OCI-LY7 (cell line): ENCODE measurements at regions of chr22 and their contacts with region 1.

Region 1: GRCh38 chr22:19447388-19448075 is at the start of gene C22orf39:
- DNase-seq: peak; percentile 95
- H3K4me3 ChIP-seq: peak within 1 kb of the TSS; percentile 91
- H3K27ac ChIP-seq: peak within 1 kb of the TSS; percentile 71
- H3K4me1 ChIP-seq: peaks cover 27% of the 10 kb centered on the region
- CTCF ChIP-seq: no peak
- total RNA-seq, gene C22orf39: 64.8 and 70.4 TPM in 2 replicates

Region 2: DNA sequence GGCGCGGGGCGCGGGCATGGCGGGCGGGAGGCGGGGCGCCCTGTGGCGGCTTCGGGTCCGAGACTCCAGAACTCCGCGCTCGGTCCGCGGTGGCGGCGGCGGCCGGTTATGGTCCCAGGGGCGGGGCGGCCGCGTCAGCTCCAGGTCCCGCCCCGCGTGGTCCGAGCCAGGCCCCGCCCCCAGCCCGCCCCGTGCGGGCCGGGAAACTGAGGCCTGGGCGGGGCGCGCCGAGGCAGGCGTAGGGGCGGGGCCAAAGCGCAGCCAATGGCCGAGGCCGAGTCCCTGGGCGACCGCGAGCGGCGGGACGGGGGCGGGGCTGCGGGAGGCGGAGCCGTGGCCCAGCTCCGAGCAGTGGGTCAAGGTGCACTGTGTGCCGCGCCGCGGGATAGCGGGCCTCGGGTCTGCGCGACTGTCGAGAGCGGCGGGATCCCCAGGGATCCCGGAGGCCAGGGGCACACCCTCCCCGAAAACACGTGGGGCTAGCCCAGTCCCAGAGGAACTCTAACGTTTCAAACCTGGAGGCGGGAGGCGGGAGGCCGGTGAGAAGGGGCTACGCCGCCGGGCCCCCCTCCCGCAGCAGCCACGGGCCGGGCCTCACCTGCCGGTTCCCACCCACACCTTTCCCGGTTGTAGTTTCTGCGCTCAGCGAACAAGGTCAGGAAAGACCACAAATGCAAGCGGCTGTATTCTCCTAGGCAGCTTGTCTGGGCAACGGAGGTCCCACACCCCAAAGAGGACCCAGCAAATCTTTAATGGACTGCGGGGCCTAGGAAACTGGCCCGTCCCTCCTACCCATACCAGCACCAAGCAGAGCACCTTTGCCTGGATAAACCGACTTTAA is 268.7 kb before region 1 on chr22 and contains the start of gene SLC25A1:
- CTCF ChIA-PET with region 1: no interaction called
- POLR2A ChIA-PET with region 1: no interaction called
- intact Hi-C with region 1: loop called (anchors 5 kb)
- DNase-seq: peak; percentile 93
- H3K4me3 ChIP-seq: peak within 1 kb of the TSS; percentile 88
- H3K27ac ChIP-seq: peak within 1 kb of the TSS; percentile 63
- H3K4me1 ChIP-seq: peaks cover 70% of the 10 kb centered on the region
- CTCF ChIP-seq: no peak
- total RNA-seq, gene SLC25A1: 52.4 and 59.5 TPM in 2 replicates

Region 3: GRCh38 chr22:19361501-19362103 is 85.9 kb before region 1 on chr22:
- CTCF ChIA-PET with region 1: no interaction called
- POLR2A ChIA-PET with region 1: no interaction called
- intact Hi-C with region 1: loop called (anchors 5 kb)
- DNase-seq: peak; percentile 83
- H3K4me3 ChIP-seq: no peak overlapping the region
- H3K27ac ChIP-seq: peak overlapping the region; percentile 42
- H3K4me1 ChIP-seq: peaks cover 18% of the 10 kb centered on the region
- CTCF ChIP-seq: no peak

Region 4: GRCh38 chr22:19469421-19469820 is 21.9 kb after region 1 on chr22:
- CTCF ChIA-PET with region 1: no interaction called
- POLR2A ChIA-PET with region 1: no interaction called
- intact Hi-C with region 1: loop called (anchors 2 kb)
- DNase-seq: no peak
- H3K4me3 ChIP-seq: no peak overlapping the region
- H3K27ac ChIP-seq: no peak overlapping the region
- H3K4me1 ChIP-seq: no peaks in the 10 kb centered on the region
- CTCF ChIP-seq: no peak

Region 5: GRCh38 chr22:19479357-19480172 is 32.0 kb after region 1 on chr22 and contains the start of gene CDC45:
- CTCF ChIA-PET with region 1: no interaction called
- POLR2A ChIA-PET with region 1: no interaction called
- intact Hi-C with region 1: loop called (anchors 5 kb)
- DNase-seq: peak; percentile 98
- H3K4me3 ChIP-seq: peak within 1 kb of the TSS; percentile 94
- H3K27ac ChIP-seq: peak within 1 kb of the TSS; percentile 75
- H3K4me1 ChIP-seq: peaks cover 14% of the 10 kb centered on the region
- CTCF ChIP-seq: no peak
- total RNA-seq, gene CDC45: 80.2 and 90.9 TPM in 2 replicates

Region 6: DNA sequence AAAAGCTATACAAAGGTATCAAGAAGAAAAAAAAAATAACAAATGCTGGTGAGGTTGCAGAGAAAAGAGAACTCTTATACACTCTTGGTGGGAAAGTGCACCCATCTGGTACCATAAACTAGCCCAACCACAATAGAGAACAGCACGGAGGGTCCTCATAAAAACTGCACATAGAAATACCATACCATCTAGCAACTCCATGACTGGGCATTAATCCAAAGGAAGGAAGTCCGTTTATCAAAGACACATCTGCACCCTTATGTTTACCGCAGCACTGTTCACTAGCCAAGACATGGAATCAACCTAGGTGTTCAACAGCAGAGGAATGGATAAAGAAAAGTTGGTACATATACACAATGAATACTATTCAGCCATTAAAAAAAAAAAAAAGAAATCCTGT is 87.5 kb after region 1 on chr22:
- CTCF ChIA-PET with region 1: no interaction called
- POLR2A ChIA-PET with region 1: no interaction called
- intact Hi-C with region 1: no loop called
- DNase-seq: no peak
- H3K4me3 ChIP-seq: no peak overlapping the region
- H3K27ac ChIP-seq: no peak overlapping the region
- H3K4me1 ChIP-seq: no peaks in the 10 kb centered on the region
- CTCF ChIP-seq: no peak